GM12878 (cell line): ENCODE measurements at regions of chr9 and their contacts with region 1.

Region 1: DNA sequence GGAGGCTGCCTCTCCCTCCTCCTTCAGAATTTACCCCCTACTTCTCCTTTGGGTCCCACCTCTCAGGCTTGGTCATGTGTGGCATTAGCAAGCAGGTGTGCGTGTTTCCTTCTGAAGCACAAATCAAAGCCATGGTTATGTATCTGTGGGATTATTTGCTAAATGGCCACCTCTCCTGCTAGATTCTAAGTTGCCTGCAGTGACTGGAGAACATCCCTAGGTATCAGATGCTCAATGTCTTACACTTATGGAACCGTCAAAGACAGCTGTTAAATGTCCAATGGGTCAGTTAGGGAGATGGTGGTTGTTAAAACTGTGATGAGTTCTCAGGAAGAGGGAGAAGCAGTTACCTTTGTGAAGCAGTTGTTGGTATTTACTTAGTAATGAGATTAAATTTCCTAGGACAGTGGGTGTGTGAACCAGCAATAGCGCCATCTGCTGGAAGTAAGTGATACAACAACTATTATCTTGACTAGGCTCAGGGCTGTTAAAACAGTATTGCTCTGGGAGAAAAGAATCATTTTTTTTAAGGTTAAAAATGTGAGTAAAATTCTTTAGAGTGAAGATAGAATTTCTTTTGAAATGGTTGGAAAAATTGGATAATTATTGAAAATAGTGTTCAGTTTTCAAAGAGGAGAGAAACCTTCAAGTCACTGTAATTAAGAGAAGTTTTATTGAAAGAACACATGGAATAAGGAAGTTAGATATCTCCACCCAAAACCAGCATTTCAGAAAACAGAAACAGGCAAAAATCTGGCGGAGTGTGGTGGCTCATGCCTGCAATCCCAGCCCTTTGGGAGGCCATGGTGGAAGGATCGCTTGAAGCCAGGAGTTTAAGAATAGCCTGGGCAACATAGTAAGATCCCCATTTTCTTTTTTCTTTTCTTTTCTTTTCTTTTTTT is 71.3 kb downstream of the TMC1 start:
- DNase-seq: peak; percentile 23
- ATAC-seq: peak; percentile 94
- H3K4me3 ChIP-seq: no peak overlapping the region
- H3K27ac ChIP-seq: no peak overlapping the region
- H3K4me1 ChIP-seq: no peaks in the 10 kb centered on the region
- H3K27me3 ChIP-seq: no peaks in the 10 kb centered on the region
- CTCF ChIP-seq: peak; percentile 64 to 76 (median 69)
- EP300 ChIP-seq: no peak
- POLR2A ChIP-seq: no peak
- RAD21 ChIP-seq: peak; percentile 86

Region 2: GRCh38 chr9:72297516-72297915 is 295.2 kb before region 1 on chr9:
- CTCF ChIA-PET with region 1: interaction called, 69 read pairs
- POLR2A ChIA-PET with region 1: no interaction called
- RAD21 ChIA-PET with region 1: interaction called, 54 read pairs
- SMC1A ChIA-PET with region 1: interaction called, 12 read pairs
- in situ Hi-C with region 1: no loop called
- intact Hi-C with region 1: loop called (anchors 1 kb)
- DNase-seq: no peak
- ATAC-seq: no peak
- H3K4me3 ChIP-seq: no peak overlapping the region
- H3K27ac ChIP-seq: no peak overlapping the region
- H3K4me1 ChIP-seq: peaks cover 6% of the 10 kb centered on the region; the same call in 1 of the 2 replicates
- H3K27me3 ChIP-seq: no peaks in the 10 kb centered on the region
- CTCF ChIP-seq: no peak
- EP300 ChIP-seq: no peak
- POLR2A ChIP-seq: no peak
- RAD21 ChIP-seq: no peak

Region 3: DNA sequence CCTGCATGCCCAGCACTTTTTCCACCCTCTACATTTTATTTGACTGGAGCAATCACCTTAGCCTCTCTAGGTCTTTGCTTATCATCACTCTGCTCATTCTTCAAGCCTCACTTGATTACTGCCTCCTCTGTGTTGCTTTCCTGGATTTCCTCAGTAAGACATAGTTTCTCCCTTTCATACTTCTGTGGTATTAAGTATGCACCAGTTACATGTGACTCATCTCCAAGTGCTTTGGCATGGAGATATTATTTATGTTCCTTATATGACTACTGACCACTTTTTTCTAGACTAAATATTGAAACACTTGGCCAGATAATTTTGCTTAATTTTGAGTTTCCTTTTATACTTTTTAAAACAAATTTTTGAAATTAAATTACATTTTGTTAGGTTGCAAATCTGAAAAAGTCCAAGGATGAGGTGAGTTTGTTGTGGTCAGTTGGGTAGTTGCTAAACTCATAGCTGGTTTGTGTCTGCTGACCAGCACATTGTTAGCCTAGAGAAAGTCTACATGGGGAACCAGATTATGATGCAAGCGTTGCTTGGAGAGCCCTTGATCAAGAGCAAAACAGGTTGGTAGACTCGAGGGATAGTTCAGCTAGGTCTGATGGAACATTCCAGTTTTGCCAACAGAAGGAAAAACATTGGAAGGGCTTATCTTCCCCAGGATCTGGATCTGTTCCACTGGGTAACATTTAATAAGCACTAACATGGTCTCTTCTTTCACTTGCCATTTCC is 68.8 kb after region 1 on chr9:
- CTCF ChIA-PET with region 1: no interaction called
- POLR2A ChIA-PET with region 1: no interaction called
- RAD21 ChIA-PET with region 1: no interaction called
- SMC1A ChIA-PET with region 1: no interaction called
- in situ Hi-C with region 1: no loop called
- intact Hi-C with region 1: no loop called
- DNase-seq: no peak
- ATAC-seq: no peak
- H3K4me3 ChIP-seq: no peak overlapping the region
- H3K27ac ChIP-seq: no peak overlapping the region
- H3K4me1 ChIP-seq: no peaks in the 10 kb centered on the region
- H3K27me3 ChIP-seq: peaks cover 0 to 3% of the 10 kb centered on the region in 2 experiments; a peak in 1 of 4 replicates
- CTCF ChIP-seq: no peak
- EP300 ChIP-seq: no peak
- POLR2A ChIP-seq: no peak
- RAD21 ChIP-seq: no peak

Region 4: DNA sequence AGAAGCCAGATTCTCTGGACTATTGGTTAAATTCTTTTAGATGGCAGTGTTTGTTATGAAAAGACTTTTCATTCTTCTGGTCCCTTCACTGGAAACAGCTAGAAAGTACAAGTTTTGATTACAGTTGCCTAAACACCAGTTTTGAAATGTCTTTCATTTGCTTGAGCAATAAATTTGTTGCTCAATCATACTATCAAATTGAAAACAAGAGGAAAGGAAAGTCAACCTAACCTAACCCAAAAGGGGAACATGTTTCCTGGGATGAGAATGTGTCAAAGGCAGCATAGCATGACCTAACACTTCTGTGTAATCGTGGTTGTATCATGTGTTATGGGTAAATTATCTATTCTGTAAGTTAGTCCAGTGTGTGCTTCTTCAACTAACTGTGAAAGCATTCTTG is 141.9 kb after region 1 on chr9:
- CTCF ChIA-PET with region 1: no interaction called
- POLR2A ChIA-PET with region 1: no interaction called
- RAD21 ChIA-PET with region 1: no interaction called
- SMC1A ChIA-PET with region 1: no interaction called
- in situ Hi-C with region 1: no loop called
- intact Hi-C with region 1: no loop called
- DNase-seq: no peak
- ATAC-seq: no peak
- H3K4me3 ChIP-seq: no peak overlapping the region
- H3K27ac ChIP-seq: no peak overlapping the region
- H3K4me1 ChIP-seq: no peaks in the 10 kb centered on the region
- H3K27me3 ChIP-seq: no peaks in the 10 kb centered on the region
- CTCF ChIP-seq: no peak
- EP300 ChIP-seq: no peak
- POLR2A ChIP-seq: no peak
- RAD21 ChIP-seq: no peak

Region 5: DNA sequence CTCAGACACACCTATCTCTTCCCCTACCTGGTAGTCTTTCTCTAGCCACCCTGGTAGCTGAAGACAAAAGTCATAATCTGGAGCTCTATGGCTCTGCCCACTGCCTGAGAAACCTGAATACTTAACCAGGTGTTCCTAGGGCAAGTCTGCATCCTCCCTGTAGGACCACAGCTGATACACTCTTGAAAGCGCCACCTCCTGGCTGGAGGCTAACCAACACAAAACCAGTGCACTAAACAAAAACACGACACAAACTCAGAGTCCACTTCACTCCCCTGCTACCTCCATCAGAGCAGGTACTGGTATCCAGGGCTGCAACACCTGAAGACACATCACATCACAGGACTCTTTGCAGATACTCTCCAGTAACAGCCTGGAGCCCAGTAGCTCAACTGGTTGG is 474.3 kb after region 1 on chr9:
- CTCF ChIA-PET with region 1: no interaction called
- POLR2A ChIA-PET with region 1: no interaction called
- RAD21 ChIA-PET with region 1: no interaction called
- SMC1A ChIA-PET with region 1: no interaction called
- in situ Hi-C with region 1: no loop called
- intact Hi-C with region 1: no loop called
- DNase-seq: no peak
- ATAC-seq: peak; percentile 28; the same call in 1 of the 3 replicates
- H3K4me3 ChIP-seq: no peak overlapping the region
- H3K27ac ChIP-seq: no peak overlapping the region
- H3K4me1 ChIP-seq: no peaks in the 10 kb centered on the region
- H3K27me3 ChIP-seq: no peaks in the 10 kb centered on the region
- CTCF ChIP-seq: peak; percentile 13 to 32 (median 28); a peak in 3 of 6 replicates
- EP300 ChIP-seq: no peak
- POLR2A ChIP-seq: no peak
- RAD21 ChIP-seq: peak; percentile 10; the same call in 1 of the 2 replicates

Region 6: GRCh38 chr9:73371801-73372200 is 779.0 kb after region 1 on chr9:
- CTCF ChIA-PET with region 1: no interaction called
- POLR2A ChIA-PET with region 1: no interaction called
- RAD21 ChIA-PET with region 1: no interaction called
- SMC1A ChIA-PET with region 1: no interaction called
- in situ Hi-C with region 1: no loop called
- intact Hi-C with region 1: no loop called
- DNase-seq: no peak
- ATAC-seq: no peak
- H3K4me3 ChIP-seq: no peak overlapping the region
- H3K27ac ChIP-seq: no peak overlapping the region
- H3K4me1 ChIP-seq: no peaks in the 10 kb centered on the region
- H3K27me3 ChIP-seq: no peaks in the 10 kb centered on the region
- CTCF ChIP-seq: no peak
- EP300 ChIP-seq: no peak
- POLR2A ChIP-seq: no peak
- RAD21 ChIP-seq: no peak